Breast epithelium (tissue), 4 donors: ENCODE measurements at regions of chr7 and their contacts with region 1.

Region 1: DNA sequence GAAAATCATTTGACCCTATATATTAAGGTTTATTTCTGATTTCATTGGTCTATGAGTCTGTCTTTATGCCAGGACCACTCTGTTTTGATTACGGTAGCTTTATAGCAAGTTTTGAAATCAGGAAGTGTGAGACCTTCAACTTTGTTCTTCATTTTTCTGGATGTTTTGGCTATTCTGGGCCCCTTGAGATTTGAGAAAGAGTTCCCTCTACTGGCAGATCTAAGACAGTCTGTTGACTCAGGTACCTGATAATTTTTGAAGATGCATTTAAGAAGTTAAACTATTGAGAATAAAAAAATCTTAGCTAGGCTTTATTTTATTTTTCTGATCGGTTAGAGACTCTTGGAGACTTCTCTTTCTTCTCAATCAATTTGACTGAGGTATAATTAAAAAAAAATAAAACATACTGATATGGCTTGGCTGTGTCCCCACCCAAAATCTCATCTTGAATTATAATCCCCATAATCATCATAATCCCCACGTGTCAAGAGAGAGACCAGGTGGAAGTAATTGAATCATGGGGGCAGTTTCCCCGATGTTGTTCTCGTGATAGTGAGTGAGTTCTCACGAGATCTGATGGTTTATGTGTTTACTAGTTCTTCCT is 209.2 kb downstream of the SNX10 start:
- DNase-seq: no peak
- H3K4me3 ChIP-seq: no peak overlapping the region
- H3K27ac ChIP-seq: no peak overlapping the region
- H3K4me1 ChIP-seq: no peaks in the 10 kb centered on the region
- H3K27me3 ChIP-seq: no peaks in the 10 kb centered on the region
- CTCF ChIP-seq: peak in 1 of 3 donors; percentile 43
- POLR2A ChIP-seq: no peak

Region 2: DNA sequence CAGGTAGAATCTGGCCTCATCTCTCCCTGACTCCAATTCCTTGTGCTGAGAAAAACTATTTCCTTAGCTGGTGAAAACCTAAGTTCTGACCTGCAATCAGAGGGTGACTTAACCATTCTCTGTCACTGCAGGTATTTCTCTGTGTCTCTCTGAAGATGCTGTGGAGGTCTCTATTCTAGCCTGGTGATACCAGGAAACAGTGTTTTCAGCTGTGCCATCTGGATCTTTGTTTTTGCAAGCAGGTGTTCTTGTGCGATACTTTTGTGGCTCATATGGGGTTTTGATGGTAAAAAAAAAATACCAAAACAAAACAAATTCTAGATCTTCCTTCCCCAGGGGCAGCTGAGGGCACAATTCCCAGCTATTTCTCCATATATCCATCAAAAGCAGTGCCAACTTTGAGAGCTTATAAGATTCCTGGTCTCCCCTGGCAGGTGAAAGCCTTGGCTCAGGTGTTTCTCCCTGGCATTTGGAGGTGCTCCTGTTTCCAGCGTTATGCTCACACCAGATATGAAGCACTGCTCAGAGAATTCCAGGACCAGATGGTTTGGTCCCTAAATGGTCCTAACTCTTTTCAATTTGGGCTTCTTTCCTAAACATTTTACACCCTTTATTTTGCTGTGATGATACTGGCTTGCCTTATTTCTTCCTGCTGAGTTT is 1262.7 kb before region 1 on chr7:
- intact Hi-C with region 1: loop called (anchors 5 kb)
- DNase-seq: no peak
- H3K4me3 ChIP-seq: no peak overlapping the region
- H3K27ac ChIP-seq: no peak overlapping the region
- H3K4me1 ChIP-seq: no peaks in the 10 kb centered on the region
- H3K27me3 ChIP-seq: no peaks in the 10 kb centered on the region
- CTCF ChIP-seq: no peak
- POLR2A ChIP-seq: no peak

Region 3: GRCh38 chr7:27501001-27501400 is 1000.1 kb after region 1 on chr7:
- intact Hi-C with region 1: no loop called
- DNase-seq: no peak
- H3K4me3 ChIP-seq: no peak overlapping the region
- H3K27ac ChIP-seq: no peak overlapping the region
- H3K4me1 ChIP-seq: no peaks in the 10 kb centered on the region
- H3K27me3 ChIP-seq: no peaks in the 10 kb centered on the region
- CTCF ChIP-seq: no peak
- POLR2A ChIP-seq: no peak